ENCODE measurements at regions of chr17 and their contacts with region 1.

Region 1: DNA sequence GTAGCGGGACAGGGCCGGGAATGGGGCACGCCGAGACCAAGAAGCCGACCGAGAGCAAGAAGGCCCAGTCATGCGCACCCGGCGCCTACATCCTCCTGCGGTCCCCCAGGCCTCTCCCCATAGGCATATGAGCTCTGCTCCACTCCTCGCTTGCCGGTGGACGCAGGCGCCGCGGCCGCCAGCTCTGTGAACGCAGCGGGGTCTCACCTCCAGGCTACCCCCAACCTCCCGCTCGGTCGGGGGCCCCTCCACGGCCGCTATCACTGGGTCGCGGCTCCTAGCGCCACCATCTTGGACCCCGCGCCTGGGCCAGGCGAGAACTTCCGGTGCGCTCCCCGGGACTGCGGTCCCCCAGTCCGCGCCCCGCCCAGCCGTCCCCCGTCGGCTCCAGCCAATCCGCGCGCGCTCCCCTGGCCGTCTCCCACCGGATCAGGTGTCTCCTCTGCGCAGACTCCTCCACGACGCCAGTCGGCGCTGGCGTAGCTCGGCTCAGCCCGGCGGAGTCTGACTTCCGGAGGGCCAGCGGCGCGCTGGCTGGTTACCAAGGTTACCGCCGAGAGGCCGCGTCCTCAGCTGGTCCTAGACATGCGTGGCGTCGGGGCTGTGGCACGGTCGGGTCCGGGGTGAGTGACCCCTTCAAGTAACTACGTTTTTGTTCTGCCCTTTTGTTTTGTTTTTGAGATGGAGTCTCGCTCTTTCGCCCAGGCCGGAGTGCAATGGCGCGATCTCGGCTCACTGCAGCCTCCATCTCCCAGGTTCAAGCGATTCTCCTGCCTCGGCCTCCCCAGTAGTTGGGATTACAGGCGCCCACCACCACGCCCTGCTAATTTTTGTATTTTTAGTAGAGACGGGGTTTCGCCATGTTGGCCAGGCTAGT is at the start of gene ZNF594:
- DNase-seq: peak; percentile 94 to 98 (median 96)
- ATAC-seq: peak; percentile 99
- H3K4me3 ChIP-seq: peak within 1 kb of the TSS; percentile 97
- H3K4me3 Mint-ChIP-seq: peak within 1 kb of the TSS; percentile 95
- H3K27ac ChIP-seq: peak within 1 kb of the TSS; percentile 51 to 81
- H3K27ac Mint-ChIP-seq: peak within 1 kb of the TSS; percentile 88
- H3K4me1 ChIP-seq: peaks cover 23% of the 10 kb centered on the region
- H3K4me1 Mint-ChIP-seq: peaks cover 33% of the 10 kb centered on the region
- H3K27me3 ChIP-seq: no peaks in the 10 kb centered on the region
- H3K27me3 Mint-ChIP-seq: no peaks in the 10 kb centered on the region
- CTCF ChIP-seq: peak; percentile 80
- total RNA-seq, gene ZNF594: 2.2 to 3.1 TPM

Region 2: DNA sequence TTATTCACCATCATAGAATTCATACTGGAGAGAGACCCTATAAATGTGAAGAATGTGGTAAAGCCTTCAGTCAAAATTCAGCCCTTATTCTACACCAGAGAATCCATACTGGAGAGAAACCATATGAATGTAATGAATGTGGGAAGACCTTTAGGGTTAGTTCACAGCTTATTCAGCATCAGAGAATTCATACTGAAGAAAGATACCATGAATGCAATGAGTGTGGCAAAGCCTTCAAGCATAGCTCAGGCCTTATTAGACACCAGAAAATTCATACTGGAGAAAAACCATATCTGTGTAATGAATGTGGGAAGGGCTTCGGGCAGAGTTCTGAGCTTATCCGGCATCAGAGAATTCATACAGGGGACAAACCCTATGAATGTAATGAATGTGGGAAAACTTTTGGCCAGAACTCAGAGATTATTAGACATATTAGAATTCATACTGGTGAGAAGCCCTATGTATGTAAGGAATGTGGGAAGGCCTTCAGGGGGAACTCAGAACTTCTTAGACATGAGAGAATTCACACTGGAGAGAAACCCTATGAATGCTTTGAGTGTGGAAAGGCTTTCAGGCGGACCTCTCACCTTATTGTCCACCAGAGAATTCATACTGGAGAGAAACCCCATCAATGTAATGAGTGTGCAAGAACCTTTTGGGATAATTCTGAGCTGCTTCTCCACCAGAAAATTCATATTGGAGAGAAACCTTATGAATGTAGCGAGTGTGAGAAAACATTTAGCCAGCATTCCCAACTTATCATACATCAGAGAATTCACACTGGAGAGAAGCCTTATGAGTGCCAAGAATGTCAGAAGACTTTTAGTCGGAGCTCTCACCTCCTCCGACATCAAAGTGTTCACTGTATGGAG is 99.4 kb before region 1 on chr17:
- CTCF ChIA-PET with region 1: no interaction called
- POLR2A ChIA-PET with region 1: no interaction called
- intact Hi-C with region 1: no loop called
- DNase-seq: no peak
- ATAC-seq: no peak
- H3K4me3 ChIP-seq: no peak overlapping the region
- H3K4me3 Mint-ChIP-seq: no peak overlapping the region
- H3K27ac ChIP-seq: no peak overlapping the region
- H3K27ac Mint-ChIP-seq: no peak overlapping the region
- H3K4me1 ChIP-seq: peaks cover 7% of the 10 kb centered on the region
- H3K4me1 Mint-ChIP-seq: peaks cover 11% of the 10 kb centered on the region
- H3K27me3 ChIP-seq: peaks cover 6% of the 10 kb centered on the region in 2 experiments
- H3K27me3 Mint-ChIP-seq: no peaks in the 10 kb centered on the region
- CTCF ChIP-seq: no peak

Region 3: GRCh38 chr17:5111402-5112204 is 80.2 kb before region 1 on chr17 and contains the start of gene ZNF232:
- CTCF ChIA-PET with region 1: interaction called, 5 read pairs
- POLR2A ChIA-PET with region 1: no interaction called
- intact Hi-C with region 1: loop called in 1 of 2 experiments (anchors 5 kb)
- DNase-seq: peak; percentile 79 to 95 (median 86)
- ATAC-seq: peak; percentile 89
- H3K4me3 ChIP-seq: peak within 1 kb of the TSS; percentile 92
- H3K4me3 Mint-ChIP-seq: peak within 1 kb of the TSS; percentile 92
- H3K27ac ChIP-seq: peak within 1 kb of the TSS; percentile 16 to 61
- H3K27ac Mint-ChIP-seq: peak within 1 kb of the TSS; percentile 65
- H3K4me1 ChIP-seq: peaks cover 29% of the 10 kb centered on the region
- H3K4me1 Mint-ChIP-seq: peaks cover 49% of the 10 kb centered on the region
- H3K27me3 ChIP-seq: peaks cover 14 to 19% of the 10 kb centered on the region in 2 experiments
- H3K27me3 Mint-ChIP-seq: peaks cover 31% of the 10 kb centered on the region
- CTCF ChIP-seq: no peak
- total RNA-seq, gene ZNF232: 2.1 to 3.6 TPM

Region 4: DNA sequence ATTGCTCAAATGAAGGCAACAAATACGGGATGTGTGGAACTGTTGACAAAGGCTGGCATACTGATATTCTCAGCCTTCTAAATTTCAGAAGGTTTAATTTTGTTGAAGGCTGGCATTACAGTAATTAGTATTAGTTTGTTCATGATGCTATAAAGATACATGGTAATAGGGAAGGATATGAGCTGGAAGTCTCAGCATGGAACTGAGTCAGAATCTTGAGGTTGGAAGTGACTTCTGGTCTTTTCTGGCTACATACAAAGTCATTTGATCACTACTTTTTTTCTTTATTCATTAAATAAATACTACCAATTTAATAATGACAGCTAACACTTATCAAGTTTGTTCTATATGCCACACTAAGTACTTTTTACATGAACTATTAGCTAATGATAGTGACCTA is 112.9 kb after region 1 on chr17:
- CTCF ChIA-PET with region 1: interaction called, 4 read pairs
- POLR2A ChIA-PET with region 1: no interaction called
- intact Hi-C with region 1: loop called in 1 of 2 experiments (anchors 2 kb)
- DNase-seq: no peak
- ATAC-seq: no peak
- H3K4me3 ChIP-seq: no peak overlapping the region
- H3K4me3 Mint-ChIP-seq: no peak overlapping the region
- H3K27ac ChIP-seq: no peak overlapping the region
- H3K27ac Mint-ChIP-seq: no peak overlapping the region
- H3K4me1 ChIP-seq: peaks cover 2% of the 10 kb centered on the region
- H3K4me1 Mint-ChIP-seq: peaks cover 66% of the 10 kb centered on the region
- H3K27me3 ChIP-seq: no peaks in the 10 kb centered on the region
- H3K27me3 Mint-ChIP-seq: no peaks in the 10 kb centered on the region
- CTCF ChIP-seq: no peak

Region 5: GRCh38 chr17:5468075-5468473 is 276.3 kb after region 1 on chr17:
- CTCF ChIA-PET with region 1: no interaction called
- POLR2A ChIA-PET with region 1: interaction called, 4 read pairs
- intact Hi-C with region 1: loop called in 1 of 2 experiments (anchors 2 kb)
- DNase-seq: peak in 3 of 14 experiments; percentile 1 to 38 (median 37)
- ATAC-seq: peak; percentile 39
- H3K4me3 ChIP-seq: peak overlapping the region; percentile 86
- H3K4me3 Mint-ChIP-seq: peak overlapping the region; percentile 69
- H3K27ac ChIP-seq: no peak overlapping the region
- H3K27ac Mint-ChIP-seq: peak overlapping the region; percentile 0
- H3K4me1 ChIP-seq: peaks cover 24% of the 10 kb centered on the region
- H3K4me1 Mint-ChIP-seq: peaks cover 43% of the 10 kb centered on the region
- H3K27me3 ChIP-seq: no peaks in the 10 kb centered on the region
- H3K27me3 Mint-ChIP-seq: no peaks in the 10 kb centered on the region
- CTCF ChIP-seq: no peak